Activated B cell treated with CpG ODN at 0.5 μM for 24 hours (primary cell): ENCODE measurements at regions of chr17 and their contacts with region 1.

Region 1: DNA sequence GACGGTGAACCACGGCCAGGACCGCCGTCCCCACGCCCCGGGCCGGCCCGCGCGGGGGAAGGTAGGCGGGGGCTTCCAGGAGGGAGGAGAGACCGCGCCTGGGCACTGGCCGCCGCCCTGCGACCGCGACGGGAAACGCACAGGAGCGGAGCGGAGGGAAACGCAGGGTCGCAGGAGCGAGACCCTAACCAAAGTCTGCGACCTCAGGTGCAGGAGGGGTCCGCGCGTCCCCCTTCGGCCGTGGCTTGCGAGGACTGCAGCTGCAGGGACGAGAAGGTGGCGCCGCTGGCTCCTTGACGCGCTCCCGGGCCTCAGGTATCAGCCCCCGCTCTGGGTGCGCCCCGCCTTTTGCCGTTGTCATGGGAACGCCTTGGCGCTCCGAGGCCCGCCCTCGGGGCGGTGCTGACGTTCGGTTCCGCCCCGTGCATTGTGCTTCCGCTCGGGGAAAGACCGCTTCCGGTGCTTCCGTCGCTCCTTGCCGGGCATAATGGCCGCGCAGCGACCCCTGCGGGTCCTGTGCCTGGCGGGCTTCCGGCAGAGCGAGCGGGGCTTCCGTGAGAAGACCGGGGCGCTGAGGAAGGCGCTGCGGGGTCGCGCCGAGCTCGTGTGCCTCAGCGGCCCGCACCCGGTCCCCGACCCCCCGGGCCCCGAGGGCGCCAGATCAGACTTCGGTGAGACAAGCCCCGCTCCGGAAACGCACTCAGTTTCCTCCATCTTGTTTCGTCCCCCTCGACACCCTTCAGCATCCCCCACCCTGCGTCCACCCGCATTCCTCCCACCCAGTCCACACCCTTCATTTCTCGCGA is at the start of gene OVCA2:
- DNase-seq: peak; percentile 97
- ATAC-seq: peak; percentile 90
- H3K4me3 Mint-ChIP-seq: peak within 1 kb of the TSS; percentile 90
- H3K27ac Mint-ChIP-seq: peak within 1 kb of the TSS; percentile 87
- H3K4me1 Mint-ChIP-seq: peaks cover 24% of the 10 kb centered on the region
- H3K27me3 Mint-ChIP-seq: no peaks in the 10 kb centered on the region
- CTCF ChIP-seq: no peak
- total RNA-seq, gene OVCA2: 29.4 and 31.2 TPM in 2 replicates

Region 2: DNA sequence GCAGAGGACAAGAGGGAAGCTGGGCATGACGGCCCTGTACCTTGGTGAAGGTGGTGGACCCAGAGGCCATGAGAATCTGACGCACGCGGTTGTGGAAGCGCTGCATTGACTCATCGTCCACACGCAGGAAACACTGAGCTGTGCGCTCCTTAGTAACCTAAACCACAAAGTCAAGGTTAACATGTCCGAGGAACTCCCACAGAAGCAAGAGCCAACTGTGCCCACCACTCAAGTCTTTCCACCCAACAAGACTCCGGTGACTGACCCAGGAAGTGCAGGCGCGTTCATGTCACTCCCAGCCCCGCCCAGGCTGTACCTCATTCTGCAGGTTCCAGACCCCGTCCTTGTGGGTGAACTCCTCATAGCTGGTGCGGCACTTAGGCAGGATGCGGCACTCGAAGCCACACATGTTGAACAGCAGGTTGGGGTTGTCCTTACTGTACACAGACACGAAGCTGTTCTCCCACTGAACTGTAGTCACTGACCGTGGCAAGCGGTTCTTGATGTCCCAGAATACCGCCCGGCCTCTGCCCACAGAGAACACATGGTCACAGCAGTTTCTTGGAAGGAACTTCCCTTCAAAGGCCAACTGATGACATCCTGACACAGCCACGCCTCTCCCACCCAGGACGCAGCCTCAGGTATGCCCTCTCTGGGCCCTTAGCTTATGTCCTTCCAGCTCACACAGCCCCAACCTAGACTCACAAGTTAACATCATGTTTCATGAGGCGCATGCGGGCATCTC is 368.6 kb before region 1 on chr17:
- CTCF ChIA-PET with region 1: interaction called, 3 read pairs
- POLR2A ChIA-PET with region 1: no interaction called
- intact Hi-C with region 1: loop called (anchors 5 kb)
- DNase-seq: no peak
- ATAC-seq: no peak
- H3K4me3 Mint-ChIP-seq: no peak overlapping the region
- H3K27ac Mint-ChIP-seq: no peak overlapping the region
- H3K4me1 Mint-ChIP-seq: no peaks in the 10 kb centered on the region
- H3K27me3 Mint-ChIP-seq: no peaks in the 10 kb centered on the region
- CTCF ChIP-seq: no peak

Region 3: GRCh38 chr17:1882836-1883235 is 158.9 kb before region 1 on chr17:
- CTCF ChIA-PET with region 1: interaction called, 3 read pairs
- POLR2A ChIA-PET with region 1: no interaction called
- intact Hi-C with region 1: loop called (anchors 5 kb)
- DNase-seq: no peak
- ATAC-seq: peak; percentile 60
- H3K4me3 Mint-ChIP-seq: no peak overlapping the region
- H3K27ac Mint-ChIP-seq: no peak overlapping the region
- H3K4me1 Mint-ChIP-seq: no peaks in the 10 kb centered on the region
- H3K27me3 Mint-ChIP-seq: no peaks in the 10 kb centered on the region
- CTCF ChIP-seq: no peak

Region 4: DNA sequence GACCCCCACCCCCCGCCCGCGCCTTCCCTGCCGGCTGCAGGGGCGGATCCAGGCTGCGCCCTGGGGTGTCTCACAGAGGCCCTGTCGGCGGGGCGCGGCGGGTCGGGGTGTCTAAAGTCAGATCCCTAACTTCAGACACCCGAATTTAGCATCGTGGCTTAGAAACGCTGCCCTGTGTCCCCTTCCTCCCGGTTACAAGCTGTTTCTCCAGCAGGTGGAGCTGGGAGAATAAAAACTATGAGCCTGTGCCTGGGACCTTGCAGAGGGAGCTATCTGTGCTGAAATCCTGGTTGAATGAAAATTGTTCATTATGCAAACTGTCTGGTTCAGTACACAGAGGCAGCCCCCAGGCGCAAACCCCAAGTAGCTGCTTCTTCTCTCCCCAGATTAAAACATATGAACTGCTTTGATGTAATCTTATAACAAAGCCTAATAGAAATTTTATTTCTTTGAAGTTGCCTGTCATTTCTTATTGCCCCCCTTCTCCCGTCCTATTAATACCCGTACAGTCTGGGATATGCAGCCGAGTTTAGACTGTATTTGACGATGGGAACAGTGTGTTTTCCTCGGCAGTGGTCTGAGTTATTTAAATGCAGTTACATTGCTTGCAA is 133.0 kb before region 1 on chr17:
- CTCF ChIA-PET with region 1: no interaction called
- POLR2A ChIA-PET with region 1: interaction called, 3 read pairs
- intact Hi-C with region 1: loop called (anchors 5 kb)
- DNase-seq: no peak
- ATAC-seq: peak; percentile 71
- H3K4me3 Mint-ChIP-seq: peak overlapping the region; percentile 67
- H3K27ac Mint-ChIP-seq: no peak overlapping the region
- H3K4me1 Mint-ChIP-seq: peaks cover 30% of the 10 kb centered on the region
- H3K27me3 Mint-ChIP-seq: peaks cover 51% of the 10 kb centered on the region
- CTCF ChIP-seq: no peak

Region 5: DNA sequence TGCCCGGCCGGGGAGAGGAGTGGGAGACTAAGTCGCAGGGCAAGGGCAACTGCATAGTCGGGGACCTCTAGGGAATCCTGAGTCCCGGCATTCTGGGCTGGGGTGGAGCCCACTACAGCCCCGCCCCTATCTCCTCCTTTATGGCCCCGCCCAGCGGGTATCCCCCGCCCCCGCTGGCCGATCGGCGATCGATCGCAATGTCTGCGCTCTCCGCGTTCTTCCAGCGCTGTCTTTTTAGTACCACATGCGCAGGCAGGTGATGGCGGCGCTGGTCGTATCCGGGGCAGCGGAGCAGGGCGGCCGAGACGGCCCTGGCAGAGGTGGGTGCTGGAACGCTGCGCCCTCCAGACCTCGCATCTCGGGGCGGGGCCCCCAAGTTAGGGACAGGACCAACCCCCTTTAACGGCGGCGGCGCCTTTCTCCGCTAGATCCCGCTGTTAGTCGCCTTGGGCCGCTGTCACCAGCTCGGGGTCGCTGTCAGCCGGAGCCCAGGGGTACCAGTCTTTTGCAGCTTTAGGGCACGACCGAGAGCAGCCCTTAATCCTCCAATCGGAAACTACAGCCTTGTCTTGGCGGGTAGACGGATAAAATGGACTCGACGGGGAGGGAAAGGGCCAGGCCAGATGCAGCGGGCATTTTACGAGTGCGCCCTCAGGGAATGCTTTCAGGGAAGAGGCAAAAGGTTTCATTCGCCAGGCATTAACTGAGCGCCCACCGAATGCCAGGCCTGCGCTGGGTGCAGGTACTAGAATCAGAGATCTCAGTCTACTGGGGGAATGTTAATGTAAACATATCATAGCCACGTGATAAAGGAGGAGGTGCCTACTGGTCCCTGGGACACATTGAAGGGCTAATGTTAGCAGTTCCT is 11.6 kb before region 1 on chr17 and contains the start of gene DPH1:
- CTCF ChIA-PET with region 1: interaction called, 5 read pairs
- POLR2A ChIA-PET with region 1: interaction called, 3 read pairs
- intact Hi-C with region 1: loop called (anchors 1 kb)
- DNase-seq: peak; percentile 80
- ATAC-seq: peak; percentile 78
- H3K4me3 Mint-ChIP-seq: peak within 1 kb of the TSS; percentile 96
- H3K27ac Mint-ChIP-seq: peak within 1 kb of the TSS; percentile 83
- H3K4me1 Mint-ChIP-seq: peaks cover 40% of the 10 kb centered on the region
- H3K27me3 Mint-ChIP-seq: peaks cover 25% of the 10 kb centered on the region
- CTCF ChIP-seq: no peak
- total RNA-seq, gene DPH1: 49.3 and 63.4 TPM in 2 replicates

Region 6: DNA sequence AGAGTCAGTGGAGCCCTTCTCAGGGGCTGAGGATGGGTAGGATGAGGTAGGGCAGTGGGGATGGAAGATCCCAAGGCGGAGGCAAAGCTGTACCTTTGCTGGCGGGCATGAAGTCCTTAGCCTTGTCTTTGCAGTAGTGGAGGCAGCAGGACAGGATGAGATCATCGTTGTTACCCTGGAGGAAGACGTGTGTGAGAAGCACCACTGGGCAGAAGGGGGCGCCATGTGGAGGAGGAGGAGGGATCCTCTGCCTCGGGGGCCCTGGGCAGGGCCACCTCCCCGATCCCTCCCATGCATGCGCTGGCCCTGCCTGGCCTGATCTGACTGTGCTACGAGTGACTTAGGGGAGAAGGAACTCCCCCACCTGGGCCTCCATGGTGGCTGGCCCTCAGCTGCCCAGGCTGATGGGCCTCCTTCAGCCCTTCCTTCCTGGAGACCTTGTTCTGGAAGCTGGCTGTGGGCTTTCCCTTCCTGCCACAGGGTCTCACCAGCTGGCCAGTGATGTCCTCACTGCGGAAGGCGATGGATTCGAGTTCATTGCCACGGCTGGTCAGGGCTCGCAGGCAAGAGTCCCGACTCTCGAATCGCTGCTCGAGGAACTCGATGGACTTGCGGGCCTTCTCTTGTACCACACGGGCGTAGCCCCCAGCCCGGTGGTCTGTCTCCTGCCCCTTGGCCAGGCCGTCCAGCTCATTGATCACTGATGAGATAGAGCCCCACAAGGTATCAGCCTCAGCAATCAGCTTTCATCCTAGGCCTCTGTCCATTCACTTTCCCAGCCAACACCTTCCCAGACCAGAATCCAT is 23.4 kb after region 1 on chr17:
- CTCF ChIA-PET with region 1: no interaction called
- POLR2A ChIA-PET with region 1: no interaction called
- intact Hi-C with region 1: no loop called
- DNase-seq: no peak
- ATAC-seq: no peak
- H3K4me3 Mint-ChIP-seq: peak overlapping the region; percentile 67
- H3K27ac Mint-ChIP-seq: peak overlapping the region; percentile 16
- H3K4me1 Mint-ChIP-seq: peaks cover 46% of the 10 kb centered on the region
- H3K27me3 Mint-ChIP-seq: no peaks in the 10 kb centered on the region
- CTCF ChIP-seq: no peak

Region 7: GRCh38 chr17:2511462-2512369 is 470.0 kb after region 1 on chr17 and contains the start of gene METTL16:
- CTCF ChIA-PET with region 1: no interaction called
- POLR2A ChIA-PET with region 1: interaction called, 12 read pairs
- intact Hi-C with region 1: no loop called
- DNase-seq: peak; percentile 84
- ATAC-seq: peak; percentile 99
- H3K4me3 Mint-ChIP-seq: no peak within 1 kb of the TSS
- H3K27ac Mint-ChIP-seq: peak within 1 kb of the TSS; percentile 36
- H3K4me1 Mint-ChIP-seq: peaks cover 10% of the 10 kb centered on the region
- H3K27me3 Mint-ChIP-seq: no peaks in the 10 kb centered on the region
- CTCF ChIP-seq: no peak
- total RNA-seq, gene METTL16: 49.4 and 57.2 TPM in 2 replicates